CD14-positive monocyte (primary cell): ENCODE measurements at regions of chr19 and their contacts with region 1.

Region 1: GRCh38 chr19:40716655-40717324 is at the starts of genes COQ8B and ITPKC:
- DNase-seq: peak; percentile 91 to 97 (median 93)
- H3K4me3 ChIP-seq: peak within 1 kb of the TSS; percentile 57 to 91 (median 83)
- H3K4me3 Mint-ChIP-seq: peak within 1 kb of the TSS; percentile 84 to 94
- H3K27ac ChIP-seq: peak within 1 kb of the TSS; percentile 72 to 96
- H3K27ac Mint-ChIP-seq: peak within 1 kb of the TSS; percentile 92 to 98 (median 95)
- H3K4me1 ChIP-seq: peaks cover 60 to 69% of the 10 kb centered on the region in 2 donors
- H3K4me1 Mint-ChIP-seq: peaks cover 75% of the 10 kb centered on the region
- H3K27me3 ChIP-seq: no peaks in the 10 kb centered on the region
- H3K27me3 Mint-ChIP-seq: peaks cover 0 to 6% (median 5%) of the 10 kb centered on the region in 3 donors
- CTCF ChIP-seq: no peak
- polyA plus RNA-seq, gene COQ8B: 16.0 to 44.0 (median 23.4) TPM
- polyA plus RNA-seq, gene ITPKC: 2.7 to 5.7 (median 2.9) TPM

Region 2: GRCh38 chr19:40662921-40663694 is 53.7 kb before region 1 on chr19:
- intact Hi-C with region 1: no loop called
- DNase-seq: peak; percentile 71 to 79 (median 72)
- H3K4me3 ChIP-seq: peak overlapping the region; percentile 45 to 82 (median 71)
- H3K4me3 Mint-ChIP-seq: peak overlapping the region; percentile 74 to 90
- H3K27ac ChIP-seq: no peak overlapping the region
- H3K27ac Mint-ChIP-seq: peak overlapping the region in 4 of 7 donors; percentile 21 to 43 (median 33)
- H3K4me1 ChIP-seq: peaks cover 10 to 16% of the 10 kb centered on the region in 2 donors
- H3K4me1 Mint-ChIP-seq: peaks cover 9% of the 10 kb centered on the region
- H3K27me3 ChIP-seq: peaks cover 0 to 7% of the 10 kb centered on the region in 2 donors
- H3K27me3 Mint-ChIP-seq: peaks cover 14 to 22% (median 17%) of the 10 kb centered on the region in 3 donors
- CTCF ChIP-seq: peak; percentile 97

Region 3: GRCh38 chr19:40690693-40691420 is 25.9 kb before region 1 on chr19:
- intact Hi-C with region 1: loop called in 1 of 2 experiments (anchors 1 kb)
- DNase-seq: peak; percentile 77 to 88 (median 87)
- H3K4me3 ChIP-seq: peak overlapping the region; percentile 48 to 77 (median 73)
- H3K4me3 Mint-ChIP-seq: peak overlapping the region; percentile 92 to 95
- H3K27ac ChIP-seq: peak overlapping the region; percentile 28 to 64
- H3K27ac Mint-ChIP-seq: peak overlapping the region; percentile 85 to 97 (median 94)
- H3K4me1 ChIP-seq: peaks cover 19 to 24% of the 10 kb centered on the region in 2 donors
- H3K4me1 Mint-ChIP-seq: peaks cover 7% of the 10 kb centered on the region
- H3K27me3 ChIP-seq: peaks cover 0 to 3% of the 10 kb centered on the region in 2 donors
- H3K27me3 Mint-ChIP-seq: no peaks in the 10 kb centered on the region
- CTCF ChIP-seq: no peak

Region 4: GRCh38 chr19:40762754-40763470 is 46.1 kb after region 1 on chr19:
- intact Hi-C with region 1: no loop called
- DNase-seq: no peak
- H3K4me3 ChIP-seq: no peak overlapping the region
- H3K4me3 Mint-ChIP-seq: no peak overlapping the region
- H3K27ac ChIP-seq: peak overlapping the region in 1 of 2 donors; percentile 51
- H3K27ac Mint-ChIP-seq: peak overlapping the region in 3 of 7 donors; percentile 19 to 77 (median 61)
- H3K4me1 ChIP-seq: no peaks in the 10 kb centered on the region
- H3K4me1 Mint-ChIP-seq: no peaks in the 10 kb centered on the region
- H3K27me3 ChIP-seq: no peaks in the 10 kb centered on the region
- H3K27me3 Mint-ChIP-seq: peaks cover 0 to 1% (median 0%) of the 10 kb centered on the region in 3 donors
- CTCF ChIP-seq: no peak

Region 5: GRCh38 chr19:40798223-40798996 is 81.6 kb after region 1 on chr19:
- intact Hi-C with region 1: loop called in 1 of 2 experiments (anchors 1 kb)
- DNase-seq: peak; percentile 100
- H3K4me3 ChIP-seq: peak overlapping the region; percentile 64 to 79 (median 66)
- H3K4me3 Mint-ChIP-seq: peak overlapping the region; percentile 90 to 95
- H3K27ac ChIP-seq: peak overlapping the region; percentile 93 to 94
- H3K27ac Mint-ChIP-seq: peak overlapping the region; percentile 97 to 99 (median 98)
- H3K4me1 ChIP-seq: peaks cover 46 to 49% of the 10 kb centered on the region in 2 donors
- H3K4me1 Mint-ChIP-seq: peaks cover 55% of the 10 kb centered on the region
- H3K27me3 ChIP-seq: no peaks in the 10 kb centered on the region
- H3K27me3 Mint-ChIP-seq: peaks cover 0 to 3% (median 0%) of the 10 kb centered on the region in 3 donors
- CTCF ChIP-seq: peak; percentile 53